Upper lobe of right lung (tissue), 1 donor: ENCODE measurements at regions of chr16 and their contacts with region 1.

Region 1: GRCh38 chr16:62021161-62021581 is 15.1 kb downstream of the CDH8 start:
- DNase-seq: no peak
- ATAC-seq: no peak
- H3K4me3 ChIP-seq: no peak overlapping the region
- H3K27ac ChIP-seq: no peak overlapping the region
- H3K4me1 ChIP-seq: no peaks in the 10 kb centered on the region
- H3K27me3 ChIP-seq: no peaks in the 10 kb centered on the region
- CTCF ChIP-seq: no peak

Region 2: GRCh38 chr16:61617384-61617783 is 403.8 kb before region 1 on chr16:
- intact Hi-C with region 1: loop called (anchors 10 kb)
- DNase-seq: no peak
- ATAC-seq: no peak
- H3K4me3 ChIP-seq: no peak overlapping the region
- H3K27ac ChIP-seq: no peak overlapping the region
- H3K4me1 ChIP-seq: no peaks in the 10 kb centered on the region
- H3K27me3 ChIP-seq: no peaks in the 10 kb centered on the region
- CTCF ChIP-seq: no peak